Tibial artery (tissue), 4 donors: ENCODE measurements at regions of chr3 and their contacts with region 1.

Region 1: GRCh38 chr3:49133226-49133951 is 539 bp upstream of the LAMB2 start:
- DNase-seq: peak; percentile 90 to 94
- H3K4me3 ChIP-seq: peak overlapping the region; percentile 72 to 78
- H3K27ac ChIP-seq: peak overlapping the region; percentile 92 to 93
- H3K4me1 ChIP-seq: peaks cover 0 to 51% (median 37%) of the 10 kb centered on the region in 4 donors
- H3K27me3 ChIP-seq: peaks cover 0 to 4% of the 10 kb centered on the region in 2 donors
- CTCF ChIP-seq: no peak

Region 2: GRCh38 chr3:49081429-49081828 is 52.0 kb before region 1 on chr3:
- intact Hi-C with region 1: no loop called
- DNase-seq: no peak
- H3K4me3 ChIP-seq: no peak overlapping the region
- H3K27ac ChIP-seq: no peak overlapping the region
- H3K4me1 ChIP-seq: no peaks in the 10 kb centered on the region
- H3K27me3 ChIP-seq: no peaks in the 10 kb centered on the region
- CTCF ChIP-seq: no peak

Region 3: DNA sequence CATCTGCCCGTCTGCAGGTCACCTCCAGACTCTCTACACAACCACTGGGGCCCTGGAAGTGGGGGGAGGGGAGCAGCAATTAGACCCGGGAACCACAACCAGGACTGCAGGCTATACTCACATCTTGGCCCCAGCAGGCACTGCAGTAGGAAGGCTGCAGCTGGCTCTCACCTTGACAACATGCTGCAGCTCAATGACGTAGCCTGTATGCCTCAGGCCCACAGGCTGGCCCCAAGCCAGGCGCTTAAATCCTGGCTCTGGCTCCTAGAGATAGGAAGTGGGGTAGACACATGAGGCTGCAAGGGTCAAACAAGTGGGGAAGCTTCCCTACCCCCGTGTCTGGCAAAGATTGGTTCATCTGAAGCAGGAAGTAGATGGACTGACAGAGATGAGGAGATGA is 35.0 kb before region 1 on chr3:
- intact Hi-C with region 1: loop called (anchors 5 kb)
- DNase-seq: no peak
- H3K4me3 ChIP-seq: no peak overlapping the region
- H3K27ac ChIP-seq: no peak overlapping the region
- H3K4me1 ChIP-seq: peaks cover 0 to 15% (median 12%) of the 10 kb centered on the region in 4 donors
- H3K27me3 ChIP-seq: no peaks in the 10 kb centered on the region
- CTCF ChIP-seq: no peak